ENCODE measurements at regions of chr5 and their contacts with region 1.

Region 1: DNA sequence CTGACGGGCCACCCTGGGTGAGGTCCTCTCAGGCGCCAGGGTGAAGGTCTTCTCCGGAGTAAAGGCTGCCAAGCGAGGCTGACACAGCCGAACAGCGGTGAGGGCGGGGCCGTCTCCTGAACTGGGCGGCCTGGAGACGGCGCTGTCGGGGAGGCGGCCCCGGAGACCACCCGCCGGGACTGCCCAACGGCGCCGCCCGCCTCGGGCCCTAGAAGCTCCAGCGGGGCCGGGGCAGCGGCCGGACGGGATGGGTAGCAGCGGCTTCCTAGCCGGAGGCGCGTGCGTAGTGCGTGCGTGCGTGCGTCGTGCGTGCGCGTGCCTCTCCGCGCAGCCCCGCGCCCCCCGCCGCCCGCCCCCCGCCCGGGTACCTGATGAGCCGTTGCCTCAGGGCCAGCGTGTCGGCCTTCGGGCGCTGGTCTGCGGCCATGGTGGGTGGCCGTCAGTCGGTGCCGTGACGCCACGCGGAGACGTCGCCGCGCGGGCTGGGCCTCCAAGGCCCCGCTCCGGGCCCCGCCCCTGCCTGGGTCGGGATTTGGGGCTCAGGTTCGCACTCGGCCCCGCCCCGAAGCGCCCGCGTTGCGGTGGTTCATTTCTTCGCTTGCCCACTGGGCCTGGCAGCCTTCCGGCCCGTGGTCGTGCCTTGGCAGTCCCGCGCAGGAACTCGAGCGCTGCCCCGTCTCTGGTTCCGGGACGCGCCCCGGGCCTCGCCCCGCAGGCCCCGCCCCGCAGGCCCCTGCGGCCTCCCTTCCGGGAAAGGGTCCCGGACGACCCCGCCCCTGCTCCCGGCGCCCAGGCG is at the start of gene PHYKPL:
- DNase-seq: peak; percentile 42 to 70
- H3K4me3 ChIP-seq: peak within 1 kb of the TSS; percentile 100
- H3K27ac ChIP-seq: peak within 1 kb of the TSS; percentile 44
- H3K4me1 ChIP-seq: peaks cover 17% of the 10 kb centered on the region
- H3K27me3 ChIP-seq: no peaks in the 10 kb centered on the region
- CTCF ChIP-seq: no peak
- total RNA-seq, gene PHYKPL: 61.3 and 73.7 TPM in 2 replicates

Region 2: DNA sequence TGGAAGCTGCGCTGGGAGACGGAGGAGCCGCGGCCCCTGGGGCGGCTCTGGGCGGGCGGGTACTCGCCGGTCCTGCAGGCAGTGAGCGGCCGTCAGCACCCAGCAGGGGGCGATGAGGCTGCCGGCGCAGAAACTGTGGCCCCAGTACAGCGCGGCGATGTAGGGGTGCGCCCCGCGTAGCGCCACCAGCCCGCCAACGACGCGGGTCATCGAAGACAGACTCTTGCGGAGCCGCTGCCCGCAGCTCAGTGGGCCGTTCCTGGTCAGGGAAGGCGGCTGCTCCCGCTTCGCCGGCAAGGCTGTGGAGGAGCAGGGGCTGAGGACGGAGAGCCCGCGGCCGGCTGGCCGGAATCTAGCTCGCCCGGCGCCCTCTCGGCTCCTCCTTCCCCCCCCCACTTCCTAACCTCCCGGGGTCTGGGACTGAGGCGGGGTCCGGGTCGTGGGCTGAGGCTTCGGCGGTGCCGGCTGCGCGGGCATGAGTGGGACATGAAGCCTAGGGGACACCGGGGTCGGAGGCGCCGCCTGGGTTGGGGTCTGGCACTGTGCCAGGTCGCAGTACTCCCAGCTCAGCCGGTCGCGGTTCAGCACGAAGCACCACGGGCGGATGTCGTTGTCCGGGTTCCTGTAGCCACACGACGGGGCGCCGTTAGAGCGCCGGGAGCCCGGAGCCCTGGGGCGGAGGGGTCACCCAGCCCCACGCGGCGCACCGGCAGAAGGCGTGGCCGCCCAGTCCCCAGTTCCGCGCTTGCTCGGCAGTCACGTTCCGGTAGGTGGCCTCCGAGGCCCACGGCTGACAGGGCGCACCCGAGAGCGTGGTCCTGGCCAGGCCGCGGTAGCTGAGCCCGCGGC is 828.3 kb before region 1 on chr5:
- CTCF ChIA-PET with region 1: interaction called, 10 read pairs
- POLR2A ChIA-PET with region 1: no interaction called
- intact Hi-C with region 1: no loop called
- DNase-seq: peak; percentile 51 to 86
- H3K4me3 ChIP-seq: peak overlapping the region; percentile 78
- H3K27ac ChIP-seq: no peak overlapping the region
- H3K4me1 ChIP-seq: peaks cover 3% of the 10 kb centered on the region; the same call in 1 of the 2 replicates
- H3K27me3 ChIP-seq: no peaks in the 10 kb centered on the region
- CTCF ChIP-seq: peak; percentile 73

Region 3: GRCh38 chr5:178204182-178204894 is 28.0 kb before region 1 on chr5 and contains the start of gene HNRNPAB:
- CTCF ChIA-PET with region 1: no interaction called
- POLR2A ChIA-PET with region 1: no interaction called
- intact Hi-C with region 1: loop called (anchors 2 kb)
- DNase-seq: peak; percentile 80 to 97
- H3K4me3 ChIP-seq: peak within 1 kb of the TSS; percentile 85
- H3K27ac ChIP-seq: peak within 1 kb of the TSS; percentile 63
- H3K4me1 ChIP-seq: peaks cover 31% of the 10 kb centered on the region
- H3K27me3 ChIP-seq: no peaks in the 10 kb centered on the region
- CTCF ChIP-seq: no peak
- total RNA-seq, gene HNRNPAB: 171 and 193 TPM in 2 replicates

Region 4: GRCh38 chr5:178777541-178777940 is 545.2 kb after region 1 on chr5:
- CTCF ChIA-PET with region 1: no interaction called
- POLR2A ChIA-PET with region 1: no interaction called
- intact Hi-C with region 1: no loop called
- DNase-seq: no peak
- H3K4me3 ChIP-seq: no peak overlapping the region
- H3K27ac ChIP-seq: no peak overlapping the region
- H3K4me1 ChIP-seq: no peaks in the 10 kb centered on the region
- H3K27me3 ChIP-seq: no peaks in the 10 kb centered on the region
- CTCF ChIP-seq: no peak

Region 5: DNA sequence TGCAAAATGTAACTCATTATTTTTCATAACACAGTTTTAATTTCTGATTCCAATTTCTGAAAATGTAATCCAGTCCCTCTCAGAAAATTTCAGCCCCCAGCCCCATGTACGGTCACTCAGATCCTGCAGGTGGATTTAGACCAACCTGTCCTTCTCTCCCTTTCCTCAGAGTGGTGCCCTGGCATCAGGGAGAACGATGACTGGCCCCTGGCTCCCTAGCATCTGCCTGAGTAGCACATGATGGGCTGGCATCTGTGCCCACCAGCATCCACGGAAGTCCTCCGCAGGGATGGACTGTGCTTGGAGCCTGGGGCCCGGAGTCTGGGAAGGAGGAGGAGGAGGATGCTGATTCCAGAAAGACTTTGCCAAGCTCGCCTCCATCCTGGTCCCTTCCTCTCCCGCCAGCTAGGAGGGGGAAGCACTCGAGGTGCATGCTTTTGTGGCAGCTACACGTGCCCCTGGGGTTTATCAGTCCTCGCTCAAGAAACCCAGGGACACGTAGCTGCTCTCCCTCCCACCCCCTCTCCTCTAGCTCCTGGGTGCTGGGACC is 1263.7 kb after region 1 on chr5:
- CTCF ChIA-PET with region 1: no interaction called
- POLR2A ChIA-PET with region 1: no interaction called
- intact Hi-C with region 1: loop called (anchors 10 kb)
- DNase-seq: peak in 1 of 2 experiments; percentile 21
- H3K4me3 ChIP-seq: no peak overlapping the region
- H3K27ac ChIP-seq: no peak overlapping the region
- H3K4me1 ChIP-seq: no peaks in the 10 kb centered on the region
- H3K27me3 ChIP-seq: peaks cover 74% of the 10 kb centered on the region
- CTCF ChIP-seq: no peak; the same call in 1 of the 2 replicates

Measured in PC-9 (cell line).